B cell (primary cell): ENCODE measurements at regions of chrX and their contacts with region 1.

Region 1: DNA sequence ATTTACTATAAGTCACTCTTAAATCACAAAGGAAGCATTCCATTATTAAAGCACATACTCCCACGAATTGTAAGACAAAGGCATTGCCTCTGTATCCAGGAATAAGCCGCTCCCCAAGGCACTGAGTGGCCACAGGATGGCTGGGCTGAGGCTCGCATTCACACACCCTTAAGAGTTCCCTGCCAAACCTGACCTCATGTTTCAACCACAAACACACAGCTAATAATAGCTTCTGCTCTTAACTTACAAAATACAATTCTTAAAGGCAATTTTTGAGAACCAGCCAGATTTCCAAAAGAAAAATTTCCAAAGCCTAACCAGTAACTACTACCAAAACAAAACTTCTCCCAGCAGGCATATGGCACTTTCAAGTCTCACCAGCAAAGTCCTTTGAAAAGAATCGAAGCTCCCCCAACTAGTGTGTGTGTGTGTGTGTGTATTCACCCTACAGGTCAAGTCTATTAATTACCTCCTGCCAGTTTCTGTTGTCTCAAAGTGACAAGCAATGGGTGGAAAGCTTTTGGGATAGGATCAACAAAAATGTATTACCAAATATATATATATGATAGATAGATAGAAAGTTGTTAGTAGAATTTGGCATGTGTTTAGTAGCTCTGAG is 36.0 kb downstream of the ARHGAP6 start:
- DNase-seq: no peak
- ATAC-seq: no peak
- H3K4me3 ChIP-seq: no peak overlapping the region
- H3K4me3 Mint-ChIP-seq: no peak overlapping the region
- H3K27ac ChIP-seq: no peak overlapping the region
- H3K27ac Mint-ChIP-seq: no peak overlapping the region
- H3K4me1 ChIP-seq: no peaks in the 10 kb centered on the region
- H3K4me1 Mint-ChIP-seq: no peaks in the 10 kb centered on the region
- H3K27me3 ChIP-seq: peaks cover 0 to 3% (median 0%) of the 10 kb centered on the region in 4 experiments
- H3K27me3 Mint-ChIP-seq: peaks cover 6% of the 10 kb centered on the region
- CTCF ChIP-seq: no peak

Region 2: DNA sequence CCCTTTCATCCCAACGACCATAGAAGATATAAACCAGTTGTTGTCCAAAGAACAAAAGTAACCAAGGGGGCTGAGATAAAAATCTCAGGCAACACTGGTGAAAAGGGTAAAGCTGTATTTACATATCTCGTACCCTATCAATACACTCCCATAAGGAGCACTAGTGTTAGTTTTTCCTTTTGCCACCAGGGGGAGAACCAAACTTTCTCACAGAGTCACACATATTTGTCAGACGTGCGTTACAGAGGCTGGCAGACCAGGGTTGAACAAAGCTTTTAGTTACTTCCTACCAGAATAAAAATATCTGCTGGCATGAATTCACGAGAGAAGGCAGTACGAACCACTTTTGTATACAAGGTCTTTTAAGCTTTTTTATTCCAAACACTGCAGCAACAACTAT is 248.2 kb before region 1 on chrX:
- CTCF ChIA-PET with region 1: no interaction called
- POLR2A ChIA-PET with region 1: no interaction called
- intact Hi-C with region 1: loop called (anchors 5 kb)
- DNase-seq: peak; percentile 64
- ATAC-seq: peak; percentile 79
- H3K4me3 ChIP-seq: no peak overlapping the region
- H3K4me3 Mint-ChIP-seq: no peak overlapping the region
- H3K27ac ChIP-seq: no peak overlapping the region
- H3K27ac Mint-ChIP-seq: no peak overlapping the region
- H3K4me1 ChIP-seq: no peaks in the 10 kb centered on the region
- H3K4me1 Mint-ChIP-seq: peaks cover 11% of the 10 kb centered on the region
- H3K27me3 ChIP-seq: peaks cover 0 to 3% (median 0%) of the 10 kb centered on the region in 4 experiments
- H3K27me3 Mint-ChIP-seq: peaks cover 9% of the 10 kb centered on the region
- CTCF ChIP-seq: peak; percentile 61

Region 3: DNA sequence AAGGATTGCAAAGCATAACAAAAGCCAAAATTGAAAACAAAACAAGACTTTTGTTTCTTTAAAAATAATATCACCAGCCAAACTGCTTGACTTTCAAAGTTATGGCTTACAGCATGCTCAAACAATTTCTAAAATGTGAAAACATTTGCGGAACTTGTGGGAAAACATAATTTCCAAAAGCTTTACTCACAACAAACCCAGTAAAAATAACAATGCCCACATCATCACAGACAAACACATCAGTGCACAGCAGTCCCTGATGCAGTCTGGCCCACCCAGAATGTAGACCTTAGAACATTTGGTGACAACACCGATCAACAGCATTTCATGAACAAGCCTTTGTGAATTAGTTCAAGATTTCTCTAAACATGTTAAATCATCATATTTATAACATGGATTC is 62.9 kb before region 1 on chrX:
- CTCF ChIA-PET with region 1: no interaction called
- POLR2A ChIA-PET with region 1: no interaction called
- intact Hi-C with region 1: loop called (anchors 10 kb)
- DNase-seq: no peak
- ATAC-seq: no peak
- H3K4me3 ChIP-seq: no peak overlapping the region
- H3K4me3 Mint-ChIP-seq: no peak overlapping the region
- H3K27ac ChIP-seq: no peak overlapping the region
- H3K27ac Mint-ChIP-seq: no peak overlapping the region
- H3K4me1 ChIP-seq: no peaks in the 10 kb centered on the region
- H3K4me1 Mint-ChIP-seq: no peaks in the 10 kb centered on the region
- H3K27me3 ChIP-seq: peaks cover 0 to 3% (median 0%) of the 10 kb centered on the region in 4 experiments
- H3K27me3 Mint-ChIP-seq: no peaks in the 10 kb centered on the region
- CTCF ChIP-seq: no peak